Endothelial cell of umbilical vein (primary cell): ENCODE measurements at regions of chr17 and their contacts with region 1.

Region 1: GRCh38 chr17:45218895-45219661 is 2.6 kb upstream of the FMNL1 start:
- DNase-seq: peak; percentile 74
- H3K4me3 ChIP-seq: no peak overlapping the region
- H3K27ac ChIP-seq: no peak overlapping the region
- H3K4me1 ChIP-seq: no peaks in the 10 kb centered on the region
- H3K27me3 ChIP-seq: peaks cover 9 to 21% of the 10 kb centered on the region in 2 experiments
- CTCF ChIP-seq: peak; percentile 86 to 92
- POLR2A ChIP-seq: no peak

Region 2: GRCh38 chr17:45077643-45078042 is 141.4 kb before region 1 on chr17:
- CTCF ChIA-PET with region 1: no interaction called
- POLR2A ChIA-PET with region 1: no interaction called
- dilution Hi-C with region 1: no loop called
- intact Hi-C with region 1: no loop called
- DNase-seq: no peak
- H3K4me3 ChIP-seq: no peak overlapping the region
- H3K27ac ChIP-seq: no peak overlapping the region
- H3K4me1 ChIP-seq: peaks cover 5% of the 10 kb centered on the region
- H3K27me3 ChIP-seq: no peaks in the 10 kb centered on the region
- CTCF ChIP-seq: no peak
- POLR2A ChIP-seq: no peak

Region 3: GRCh38 chr17:45148183-45149036 is 70.7 kb before region 1 on chr17 and contains the start of gene HEXIM1:
- CTCF ChIA-PET with region 1: interaction called, 10 read pairs
- POLR2A ChIA-PET with region 1: no interaction called
- dilution Hi-C with region 1: no loop called
- intact Hi-C with region 1: no loop called
- DNase-seq: peak; percentile 100
- H3K4me3 ChIP-seq: peak within 1 kb of the TSS; percentile 68 to 95 (median 90)
- H3K27ac ChIP-seq: peak within 1 kb of the TSS; percentile 97
- H3K4me1 ChIP-seq: peaks cover 24% of the 10 kb centered on the region
- H3K27me3 ChIP-seq: no peaks in the 10 kb centered on the region
- CTCF ChIP-seq: no peak
- POLR2A ChIP-seq: peak; percentile 100
- total RNA-seq, gene HEXIM1: 20.0 and 20.6 TPM in 2 replicates

Region 4: DNA sequence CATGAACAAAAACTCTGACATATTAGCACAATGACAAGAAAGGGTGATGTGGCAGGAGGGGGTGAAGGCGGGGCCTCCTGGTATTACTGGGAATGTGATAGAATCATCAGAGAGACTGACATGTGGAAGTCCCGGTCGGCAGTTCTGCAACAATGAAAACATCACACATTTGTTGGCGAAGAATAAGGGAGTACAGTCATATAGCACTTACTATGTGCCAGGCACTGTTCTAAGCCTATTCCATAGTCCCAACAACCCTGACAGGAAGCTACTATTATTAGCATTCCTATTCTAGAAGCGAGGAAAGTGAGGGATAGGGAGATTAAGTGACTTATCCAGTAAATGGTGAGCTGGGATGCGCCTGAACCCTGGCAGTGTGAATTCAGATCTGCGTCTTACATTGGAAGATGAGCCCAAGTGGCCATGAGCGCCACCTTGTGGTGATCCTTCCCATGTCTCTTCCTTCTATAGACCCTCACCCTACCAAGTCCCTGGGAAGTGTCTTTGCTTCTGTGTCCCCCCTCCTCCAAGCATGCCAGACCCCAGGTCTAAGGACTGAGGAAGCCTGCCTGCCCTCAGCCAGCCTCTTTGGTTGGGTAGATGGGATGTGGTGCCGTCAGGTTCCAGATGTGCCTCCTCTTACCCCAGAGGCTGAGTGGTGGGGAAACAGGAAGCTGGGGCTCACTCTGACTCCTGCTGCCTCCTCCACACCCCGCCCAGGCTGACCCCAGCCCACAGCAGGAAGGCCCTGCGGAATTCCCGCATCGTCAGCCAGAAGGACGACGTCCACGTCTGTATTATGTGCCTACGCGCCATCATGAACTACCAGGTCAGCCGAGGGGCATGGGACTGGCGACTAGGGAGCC is 16.6 kb after region 1 on chr17:
- CTCF ChIA-PET with region 1: interaction called, 93 read pairs
- POLR2A ChIA-PET with region 1: no interaction called
- dilution Hi-C with region 1: no loop called
- intact Hi-C with region 1: loop called (anchors 1 kb)
- DNase-seq: peak; percentile 77
- H3K4me3 ChIP-seq: no peak overlapping the region
- H3K27ac ChIP-seq: no peak overlapping the region
- H3K4me1 ChIP-seq: no peaks in the 10 kb centered on the region
- H3K27me3 ChIP-seq: peaks cover 4 to 5% of the 10 kb centered on the region in 2 experiments
- CTCF ChIP-seq: peak; percentile 82 to 87
- POLR2A ChIP-seq: no peak

Region 5: GRCh38 chr17:45394913-45395568 is 176.0 kb after region 1 on chr17:
- CTCF ChIA-PET with region 1: interaction called, 107 read pairs
- POLR2A ChIA-PET with region 1: no interaction called
- dilution Hi-C with region 1: no loop called
- intact Hi-C with region 1: no loop called
- DNase-seq: peak; percentile 78
- H3K4me3 ChIP-seq: no peak overlapping the region
- H3K27ac ChIP-seq: no peak overlapping the region
- H3K4me1 ChIP-seq: no peaks in the 10 kb centered on the region
- H3K27me3 ChIP-seq: no peaks in the 10 kb centered on the region
- CTCF ChIP-seq: peak; percentile 62 to 78
- POLR2A ChIP-seq: no peak

Region 6: DNA sequence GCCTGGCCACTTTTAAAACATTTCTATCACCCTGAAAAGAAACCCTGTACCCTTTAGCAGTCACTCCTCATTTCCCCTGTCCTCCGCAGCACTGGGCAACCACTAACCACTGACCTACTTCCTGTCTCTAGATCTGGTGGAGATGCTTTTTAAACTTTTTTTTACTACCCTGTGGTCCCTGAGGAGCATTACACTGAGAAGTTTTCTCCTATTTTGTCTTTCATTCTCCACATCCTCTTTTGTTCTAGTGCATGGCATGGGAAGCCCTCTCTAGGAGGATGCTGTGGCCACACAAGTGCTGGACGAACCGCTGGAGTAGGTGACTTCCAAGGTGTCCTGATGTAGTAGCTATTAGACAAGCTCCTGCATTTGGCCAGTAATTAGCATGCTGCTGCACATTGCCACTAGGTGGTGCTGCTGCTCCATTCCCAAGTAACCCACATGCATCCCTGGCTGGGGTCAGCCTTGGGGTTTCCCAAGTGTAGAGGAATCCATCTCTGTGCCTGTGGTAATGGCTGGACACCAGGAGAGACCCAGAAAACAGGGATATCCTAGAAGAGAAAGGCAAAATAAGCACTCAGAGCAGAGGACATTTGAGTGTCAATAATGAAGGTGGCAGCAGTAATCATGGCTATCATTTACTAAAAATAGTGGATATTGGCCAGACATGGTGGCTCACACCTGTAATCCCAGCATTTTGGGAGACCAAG is 421.2 kb after region 1 on chr17:
- CTCF ChIA-PET with region 1: interaction called, 10 read pairs
- POLR2A ChIA-PET with region 1: no interaction called
- dilution Hi-C with region 1: no loop called
- intact Hi-C with region 1: no loop called
- DNase-seq: peak; percentile 75
- H3K4me3 ChIP-seq: no peak overlapping the region
- H3K27ac ChIP-seq: no peak overlapping the region
- H3K4me1 ChIP-seq: no peaks in the 10 kb centered on the region
- H3K27me3 ChIP-seq: peaks cover 0 to 1% of the 10 kb centered on the region in 2 experiments
- CTCF ChIP-seq: peak; percentile 92 to 97
- POLR2A ChIP-seq: no peak

Region 7: DNA sequence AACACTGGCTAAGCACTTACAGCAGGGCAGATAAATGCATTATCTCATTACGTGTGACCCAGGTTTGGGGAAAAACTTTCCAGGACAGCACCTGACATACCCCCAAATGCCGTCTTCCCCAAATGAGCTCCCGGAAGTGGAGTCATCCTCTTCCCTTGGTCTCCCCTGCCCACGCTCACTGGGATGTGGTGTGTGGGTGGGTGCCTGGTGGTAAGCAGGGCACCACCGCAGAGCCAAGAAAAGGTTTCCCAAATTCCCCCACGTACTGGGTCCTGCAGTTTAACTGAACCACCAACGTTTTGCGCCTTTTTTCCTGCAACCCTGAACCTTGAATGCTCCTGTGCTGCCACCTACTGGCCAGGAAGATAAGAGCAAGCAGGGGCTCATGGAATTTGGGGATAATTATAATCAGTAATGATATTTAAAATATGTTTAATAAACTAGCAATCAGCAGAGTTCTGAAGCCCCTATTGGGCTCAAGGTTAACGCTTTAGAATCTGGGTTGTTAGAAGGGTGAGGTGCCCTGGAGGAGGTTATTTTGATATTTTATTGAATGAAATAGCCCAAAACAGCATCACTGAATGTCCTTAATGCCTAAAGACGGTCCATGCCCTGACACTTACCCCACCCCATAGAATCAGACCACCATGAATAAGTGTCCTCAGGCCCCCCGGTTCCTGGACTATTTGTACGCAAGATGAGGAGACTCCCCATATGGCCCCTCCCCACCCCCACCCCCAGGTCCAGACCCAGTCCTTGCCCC is 633.6 kb after region 1 on chr17:
- CTCF ChIA-PET with region 1: interaction called, 13 read pairs
- POLR2A ChIA-PET with region 1: no interaction called
- dilution Hi-C with region 1: no loop called
- intact Hi-C with region 1: no loop called
- DNase-seq: peak; percentile 44
- H3K4me3 ChIP-seq: no peak overlapping the region
- H3K27ac ChIP-seq: no peak overlapping the region
- H3K4me1 ChIP-seq: no peaks in the 10 kb centered on the region
- H3K27me3 ChIP-seq: peaks cover 0 to 4% of the 10 kb centered on the region in 2 experiments
- CTCF ChIP-seq: peak; percentile 76 to 91
- POLR2A ChIP-seq: no peak